Lower leg skin (tissue), 4 donors: ENCODE measurements at regions of chr11 and their contacts with region 1.

Region 1: DNA sequence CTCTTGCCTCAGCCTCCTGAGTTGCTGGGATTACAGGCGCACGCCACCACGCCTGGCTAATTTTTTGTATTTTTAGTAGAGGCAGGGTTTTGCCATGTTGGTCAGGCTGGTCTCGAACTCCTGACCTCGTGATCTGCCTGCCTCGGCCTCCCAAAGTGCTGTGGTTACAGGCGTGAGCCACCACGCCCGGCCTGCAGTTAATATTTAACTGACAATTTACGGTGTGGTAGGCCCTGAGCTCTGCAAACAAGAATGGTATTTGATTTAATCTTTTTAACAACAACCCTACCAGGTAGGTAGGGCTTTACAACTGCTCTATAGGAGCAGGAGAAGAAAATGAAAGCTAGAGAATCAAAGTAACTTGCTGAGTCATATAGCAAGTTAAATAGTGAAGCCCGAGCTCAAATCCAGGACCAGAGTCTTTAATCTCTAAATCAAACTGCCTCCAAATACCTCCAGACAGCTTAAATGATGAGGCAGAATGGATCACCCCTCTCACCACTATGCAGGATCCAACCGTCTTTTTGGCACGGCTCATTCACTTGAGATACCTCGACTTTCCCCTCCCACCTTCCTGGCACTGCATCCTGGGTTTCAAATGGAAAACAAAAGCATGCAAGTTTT is 9.4 kb downstream of the UEVLD start:
- DNase-seq: no peak
- H3K4me3 ChIP-seq: no peak overlapping the region
- CTCF ChIP-seq: no peak
- POLR2A ChIP-seq: no peak

Region 2: DNA sequence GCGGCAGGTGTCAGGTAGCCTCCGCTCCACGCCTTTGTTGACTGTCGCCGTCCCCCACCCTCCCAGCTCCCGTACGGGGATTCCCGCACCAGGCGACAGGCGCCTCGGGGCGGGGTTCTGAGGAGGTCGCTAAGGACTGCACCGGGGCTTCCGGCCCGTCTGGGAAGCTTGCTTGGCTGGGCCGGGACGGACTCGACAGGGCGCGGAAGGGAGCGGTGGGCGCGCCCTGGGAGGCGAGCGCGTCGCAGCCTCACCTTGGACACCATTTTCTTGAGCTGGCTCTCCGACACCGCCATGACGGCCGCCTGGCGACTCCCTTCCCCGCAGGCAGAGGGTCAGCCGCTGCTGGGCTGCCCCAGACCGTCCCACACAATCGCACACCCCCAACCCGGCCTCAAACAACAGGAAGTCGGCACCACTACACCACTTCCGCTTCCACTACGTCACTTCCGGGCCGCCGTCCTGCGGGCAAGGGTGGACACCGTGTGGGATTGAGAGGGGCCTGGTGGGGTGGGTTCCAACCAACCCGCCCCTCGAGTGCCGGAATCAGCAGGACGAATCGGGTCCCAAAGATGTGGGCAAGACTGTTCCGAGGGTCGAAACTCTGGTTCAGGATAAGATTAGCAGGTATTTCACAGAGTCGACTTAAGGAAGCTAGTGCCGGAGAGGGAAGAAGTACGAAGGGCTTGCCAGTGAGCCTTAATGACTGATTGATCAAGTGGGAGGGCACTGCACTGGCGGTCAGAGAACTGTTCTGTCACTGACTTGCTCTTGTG is 52.4 kb before region 1 on chr11 and contains the start of gene TSG101:
- intact Hi-C with region 1: loop called (anchors 10 kb)
- DNase-seq: peak; percentile 87 to 98
- H3K4me3 ChIP-seq: peak within 1 kb of the TSS; percentile 86
- CTCF ChIP-seq: no peak
- POLR2A ChIP-seq: peak in 1 of 2 donors; percentile 56
- total RNA-seq, gene TSG101: 76.9 to 103 (median 85.8) TPM